ENCODE measurements at regions of chr7 and their contacts with region 1.

Region 1: DNA sequence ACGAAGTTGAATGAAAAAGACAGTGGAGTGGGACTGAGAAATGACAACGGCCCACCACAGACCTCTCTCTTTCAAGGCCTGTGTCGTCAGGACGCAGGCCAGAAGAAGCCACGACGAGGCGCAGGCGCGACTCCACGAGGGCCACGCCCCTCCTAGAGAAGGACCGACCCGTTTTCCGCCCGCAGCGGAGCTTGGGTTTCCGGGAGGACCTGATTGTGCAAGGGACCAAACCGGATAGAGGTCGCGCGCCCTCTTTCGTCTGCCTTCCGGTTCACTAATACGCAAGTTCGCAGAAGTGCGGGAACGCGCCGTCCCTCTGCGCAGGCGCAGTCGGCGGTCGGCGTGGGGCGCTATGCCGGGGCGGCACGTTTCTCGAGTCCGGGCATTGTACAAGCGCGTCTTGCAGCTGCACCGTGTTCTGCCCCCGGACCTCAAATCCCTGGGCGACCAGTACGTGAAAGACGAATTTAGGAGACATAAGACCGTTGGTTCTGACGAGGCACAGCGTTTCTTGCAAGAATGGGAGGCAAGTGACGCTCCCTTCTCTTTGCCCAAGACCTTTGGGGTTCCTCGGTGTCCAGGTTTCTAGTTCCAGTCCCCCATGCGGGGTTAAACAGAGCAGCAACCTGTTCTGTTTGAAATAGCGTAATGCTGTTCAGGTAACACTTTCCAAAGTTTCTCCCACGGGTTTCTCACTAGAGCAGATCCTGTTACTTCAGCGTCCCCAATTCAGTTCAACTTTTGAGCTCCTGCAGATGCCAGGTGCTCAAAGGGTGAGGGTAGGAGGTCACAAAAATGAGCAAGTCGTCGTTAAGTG is at the start of gene SDHAF3:
- DNase-seq: peak; percentile 95
- ATAC-seq: peak; percentile 96
- H3K4me3 ChIP-seq: peak within 1 kb of the TSS; percentile 64 to 83 (median 80)
- H3K27ac ChIP-seq: peak within 1 kb of the TSS; percentile 76
- H3K4me1 ChIP-seq: peaks cover 30% of the 10 kb centered on the region
- H3K27me3 ChIP-seq: no peaks in the 10 kb centered on the region; a peak in 1 of 5 replicates
- CTCF ChIP-seq: peak; percentile 76
- EP300 ChIP-seq: peak; percentile 38 to 51; a peak in 2 of 4 replicates
- POLR2A ChIP-seq: peak; percentile 92 to 97
- RAD21 ChIP-seq: peak; percentile 47; the same call in 1 of the 2 replicates
- total RNA-seq, gene SDHAF3: 32.6 and 46.9 TPM in 2 replicates

Region 2: DNA sequence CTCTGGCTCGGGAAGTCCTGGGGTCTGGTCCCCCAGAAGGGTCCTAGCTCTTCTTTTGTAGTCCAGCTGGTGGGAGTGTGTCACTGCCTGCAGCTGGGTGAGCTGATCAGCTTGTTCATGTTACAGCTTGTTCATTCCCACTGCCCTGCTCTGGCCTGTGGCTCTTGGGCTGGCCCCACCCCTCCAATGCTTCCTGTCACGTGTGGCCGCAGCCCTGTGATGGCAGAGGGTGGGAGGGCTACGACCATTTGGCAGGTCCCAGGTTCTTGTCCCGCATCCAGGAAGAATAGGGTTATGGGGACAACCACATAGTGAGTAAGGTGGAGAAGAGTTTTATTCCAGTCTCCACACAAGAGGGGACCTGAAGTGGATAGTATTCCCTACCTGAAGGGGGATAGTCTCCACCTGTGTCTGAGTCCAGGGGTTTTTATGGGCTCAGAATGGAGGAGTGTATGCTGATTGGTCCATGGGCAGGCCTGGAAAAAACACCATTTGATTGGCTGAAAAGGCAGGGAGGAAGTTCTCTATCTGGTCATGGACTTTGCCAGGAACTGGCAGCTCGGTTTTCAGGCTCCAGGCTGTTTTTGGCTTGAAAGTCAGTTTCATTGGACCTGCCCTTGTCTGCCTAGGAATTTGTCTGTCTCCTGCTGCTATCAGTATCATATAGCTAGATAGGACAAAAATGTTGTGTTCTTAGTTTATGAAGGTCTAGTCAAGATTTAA is 13.0 kb after region 1 on chr7:
- CTCF ChIA-PET with region 1: no interaction called
- POLR2A ChIA-PET with region 1: interaction called, 11 read pairs
- in situ Hi-C with region 1: no loop called
- intact Hi-C with region 1: no loop called
- DNase-seq: no peak
- ATAC-seq: peak; percentile 46; the same call in 2 of the 3 replicates
- H3K4me3 ChIP-seq: no peak overlapping the region
- H3K27ac ChIP-seq: no peak overlapping the region
- H3K4me1 ChIP-seq: peaks cover 18% of the 10 kb centered on the region
- H3K27me3 ChIP-seq: no peaks in the 10 kb centered on the region
- CTCF ChIP-seq: no peak
- EP300 ChIP-seq: no peak
- POLR2A ChIP-seq: no peak
- RAD21 ChIP-seq: no peak

Region 3: GRCh38 chr7:97845622-97846203 is 728.1 kb after region 1 on chr7:
- CTCF ChIA-PET with region 1: no interaction called
- POLR2A ChIA-PET with region 1: no interaction called
- in situ Hi-C with region 1: loop called (anchors 10 kb)
- intact Hi-C with region 1: no loop called
- DNase-seq: peak; percentile 9
- ATAC-seq: no peak
- H3K4me3 ChIP-seq: no peak overlapping the region
- H3K27ac ChIP-seq: no peak overlapping the region
- H3K4me1 ChIP-seq: peaks cover 7% of the 10 kb centered on the region; the same call in 1 of the 2 replicates
- H3K27me3 ChIP-seq: no peaks in the 10 kb centered on the region
- CTCF ChIP-seq: peak; percentile 37; the same call in 1 of the 2 replicates
- EP300 ChIP-seq: no peak
- POLR2A ChIP-seq: no peak
- RAD21 ChIP-seq: no peak

Region 4: DNA sequence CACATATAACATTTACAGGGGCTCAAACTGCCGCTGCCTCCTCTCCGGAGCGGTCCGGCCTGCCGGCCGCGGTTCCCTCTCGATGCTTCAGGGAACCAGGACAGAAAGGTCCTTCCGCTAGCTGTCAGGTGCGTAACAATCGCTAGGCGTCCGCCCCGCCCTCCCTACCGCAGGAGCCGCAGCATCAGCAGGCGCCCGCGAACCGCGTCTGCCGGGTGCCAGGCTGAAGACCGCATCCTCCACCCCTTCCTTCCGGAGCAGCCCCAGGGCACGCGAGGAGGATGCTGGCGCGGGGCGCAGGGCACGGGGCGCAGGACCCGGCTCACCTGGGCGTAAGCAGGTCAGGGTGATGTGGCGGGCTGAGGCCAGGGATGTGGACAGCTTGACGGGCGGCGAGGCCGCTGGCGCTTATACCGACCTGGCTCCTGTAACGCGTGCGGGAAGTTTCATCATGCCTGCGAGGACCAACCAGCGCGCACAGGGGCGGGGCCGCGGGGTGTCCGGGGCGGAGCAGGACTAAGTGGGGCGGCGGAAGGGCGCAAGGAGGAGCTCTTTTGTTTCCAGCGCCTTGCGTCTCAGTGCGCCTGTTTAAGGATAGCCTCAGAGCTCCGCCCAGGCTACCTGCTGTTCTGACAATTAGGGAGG is 754.6 kb after region 1 on chr7 and contains the start of gene ASNS:
- CTCF ChIA-PET with region 1: no interaction called
- POLR2A ChIA-PET with region 1: interaction called, 12 read pairs
- in situ Hi-C with region 1: no loop called
- intact Hi-C with region 1: no loop called
- DNase-seq: peak; percentile 77
- ATAC-seq: peak; percentile 99
- H3K4me3 ChIP-seq: peak within 1 kb of the TSS; percentile 80 to 97 (median 85)
- H3K27ac ChIP-seq: peak within 1 kb of the TSS; percentile 64
- H3K4me1 ChIP-seq: peaks cover 37% of the 10 kb centered on the region
- H3K27me3 ChIP-seq: no peaks in the 10 kb centered on the region; a peak in 1 of 5 replicates
- CTCF ChIP-seq: 0 out of 2 replicates have a peak, but pooled peaks have one; percentile 22
- EP300 ChIP-seq: peak in 1 of 2 experiments; percentile 38; a peak in 1 of 4 replicates
- POLR2A ChIP-seq: peak; percentile 74 to 93
- RAD21 ChIP-seq: no peak
- total RNA-seq, gene ASNS: 55.0 and 81.9 TPM in 2 replicates

Measured in HepG2 (cell line).